ENCODE measurements at regions of chr11 and their contacts with region 1.

Region 1: GRCh38 chr11:130434521-130435223 is 6.3 kb upstream of the ADAMTS8 start:
- DNase-seq: peak; percentile 96
- ATAC-seq: peak; percentile 76
- H3K4me3 ChIP-seq: peak overlapping the region; percentile 75
- H3K27ac ChIP-seq: peak overlapping the region; percentile 80
- H3K4me1 ChIP-seq: peaks cover 21% of the 10 kb centered on the region
- H3K27me3 ChIP-seq: peaks cover 11% of the 10 kb centered on the region
- CTCF ChIP-seq: peak; percentile 83

Region 2: GRCh38 chr11:130213143-130213978 is 221.3 kb before region 1 on chr11:
- CTCF ChIA-PET with region 1: interaction called, 16 read pairs
- POLR2A ChIA-PET with region 1: no interaction called
- intact Hi-C with region 1: loop called (anchors 2 kb)
- DNase-seq: peak; percentile 76
- ATAC-seq: peak; percentile 76
- H3K4me3 ChIP-seq: no peak overlapping the region
- H3K27ac ChIP-seq: no peak overlapping the region
- H3K4me1 ChIP-seq: no peaks in the 10 kb centered on the region; the same call in 1 of the 2 replicates
- H3K27me3 ChIP-seq: no peaks in the 10 kb centered on the region
- CTCF ChIP-seq: peak; percentile 98

Region 3: GRCh38 chr11:130585545-130585944 is 150.9 kb after region 1 on chr11:
- CTCF ChIA-PET with region 1: no interaction called
- POLR2A ChIA-PET with region 1: no interaction called
- intact Hi-C with region 1: loop called (anchors 2 kb)
- DNase-seq: peak; percentile 75
- ATAC-seq: peak; percentile 90
- H3K4me3 ChIP-seq: no peak overlapping the region
- H3K27ac ChIP-seq: peak overlapping the region; percentile 75
- H3K4me1 ChIP-seq: peaks cover 30% of the 10 kb centered on the region
- H3K27me3 ChIP-seq: no peaks in the 10 kb centered on the region
- CTCF ChIP-seq: no peak; the same call in 1 of the 2 replicates

Region 4: GRCh38 chr11:130827451-130828377 is 393.0 kb after region 1 on chr11:
- CTCF ChIA-PET with region 1: interaction called, 26 read pairs
- POLR2A ChIA-PET with region 1: no interaction called
- intact Hi-C with region 1: loop called (anchors 1 kb)
- DNase-seq: peak; percentile 93
- ATAC-seq: peak; percentile 95
- H3K4me3 ChIP-seq: no peak overlapping the region
- H3K27ac ChIP-seq: peak overlapping the region; percentile 58
- H3K4me1 ChIP-seq: peaks cover 23% of the 10 kb centered on the region
- H3K27me3 ChIP-seq: no peaks in the 10 kb centered on the region
- CTCF ChIP-seq: peak; percentile 89

Region 5: DNA sequence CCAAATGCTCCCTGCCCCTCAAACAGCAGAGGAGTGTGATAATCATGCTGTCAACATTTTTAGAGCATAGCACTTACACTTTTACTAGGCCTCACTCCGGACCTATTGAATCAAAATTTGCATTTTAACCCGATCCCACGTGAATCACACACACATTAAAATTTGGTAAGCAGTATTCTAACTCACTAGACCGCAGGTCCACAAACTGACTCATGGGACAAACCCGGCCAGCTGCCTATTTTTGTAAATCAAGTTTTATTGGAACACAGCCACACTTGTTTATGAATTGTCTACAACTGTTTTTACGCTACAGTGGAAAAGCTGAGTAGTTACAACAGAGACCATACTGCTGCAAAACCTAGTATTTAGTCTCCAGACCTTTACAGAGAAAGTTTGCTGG is 438.3 kb after region 1 on chr11:
- CTCF ChIA-PET with region 1: interaction called, 3 read pairs
- POLR2A ChIA-PET with region 1: no interaction called
- intact Hi-C with region 1: loop called (anchors 1 kb)
- DNase-seq: peak; percentile 96
- ATAC-seq: peak; percentile 93
- H3K4me3 ChIP-seq: no peak overlapping the region
- H3K27ac ChIP-seq: peak overlapping the region; percentile 77
- H3K4me1 ChIP-seq: peaks cover 30% of the 10 kb centered on the region
- H3K27me3 ChIP-seq: no peaks in the 10 kb centered on the region
- CTCF ChIP-seq: no peak